SK-N-SH (cell line): ENCODE measurements at regions of chr9 and their contacts with region 1.

Region 1: DNA sequence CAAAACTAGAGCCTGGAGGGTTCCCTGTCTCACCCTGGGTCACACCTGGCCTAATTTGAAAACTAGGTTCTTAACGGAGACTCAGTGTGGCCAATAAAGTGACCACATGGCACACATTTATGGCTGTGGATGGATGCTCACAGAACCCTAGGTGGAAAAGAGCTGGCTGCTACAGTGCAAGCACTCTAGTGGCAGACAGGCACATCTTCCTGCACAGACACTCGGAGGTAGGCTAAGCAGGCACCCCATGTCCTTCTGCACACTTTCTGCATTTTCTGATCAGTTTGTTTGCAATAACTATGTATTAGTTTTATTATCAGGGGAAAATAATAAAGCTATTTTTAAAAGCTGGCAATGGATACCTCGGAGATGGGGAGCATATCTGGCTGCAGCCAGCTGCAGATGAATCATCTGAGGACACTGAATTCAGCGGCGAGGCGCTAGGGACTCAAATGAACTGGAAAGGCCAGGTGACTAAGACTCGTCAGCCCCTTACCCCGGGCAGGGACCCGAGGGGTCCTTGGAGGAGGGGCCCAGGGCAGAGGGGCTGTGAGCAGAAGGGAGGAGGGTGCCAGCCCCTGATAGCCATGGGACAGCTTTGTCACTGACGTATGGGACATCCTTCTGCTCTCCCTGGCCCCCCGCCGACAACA is 96.2 kb downstream of the OLFM1 start:
- DNase-seq: no peak
- H3K4me3 ChIP-seq: no peak overlapping the region
- H3K27ac ChIP-seq: no peak overlapping the region; a peak in 1 of 4 replicates
- H3K4me1 ChIP-seq: peaks cover 0 to 34% of the 10 kb centered on the region in 2 experiments; a peak in 1 of 4 replicates
- H3K27me3 ChIP-seq: no peaks in the 10 kb centered on the region
- CTCF ChIP-seq: no peak
- EP300 ChIP-seq: no peak
- RAD21 ChIP-seq: no peak

Region 2: GRCh38 chr9:135146766-135147473 is 36.7 kb before region 1 on chr9:
- CTCF ChIA-PET with region 1: interaction called, 13 read pairs
- POLR2A ChIA-PET with region 1: no interaction called
- DNase-seq: peak; percentile 88
- H3K4me3 ChIP-seq: no peak overlapping the region; a peak in 1 of 4 replicates
- H3K27ac ChIP-seq: peak overlapping the region in 1 of 2 experiments; percentile 93; a peak in 2 of 4 replicates
- H3K4me1 ChIP-seq: peaks cover 0 to 39% of the 10 kb centered on the region in 2 experiments; a peak in 1 of 4 replicates
- H3K27me3 ChIP-seq: no peaks in the 10 kb centered on the region
- CTCF ChIP-seq: no peak
- EP300 ChIP-seq: peak in 1 of 2 experiments; percentile 58; a peak in 1 of 4 replicates
- RAD21 ChIP-seq: 0 out of 2 replicates have a peak, but pooled peaks have one; percentile 3

Region 3: GRCh38 chr9:135157856-135158563 is 25.6 kb before region 1 on chr9:
- CTCF ChIA-PET with region 1: interaction called, 10 read pairs
- POLR2A ChIA-PET with region 1: interaction called, 3 read pairs
- DNase-seq: no peak
- H3K4me3 ChIP-seq: no peak overlapping the region
- H3K27ac ChIP-seq: no peak overlapping the region
- H3K4me1 ChIP-seq: peaks cover 0 to 26% of the 10 kb centered on the region in 2 experiments; a peak in 1 of 4 replicates
- H3K27me3 ChIP-seq: no peaks in the 10 kb centered on the region
- CTCF ChIP-seq: no peak
- EP300 ChIP-seq: no peak
- RAD21 ChIP-seq: no peak

Region 4: GRCh38 chr9:135602789-135603481 is 419.3 kb after region 1 on chr9:
- CTCF ChIA-PET with region 1: no interaction called
- POLR2A ChIA-PET with region 1: no interaction called
- DNase-seq: peak; percentile 68
- H3K4me3 ChIP-seq: no peak overlapping the region; a peak in 1 of 4 replicates
- H3K27ac ChIP-seq: no peak overlapping the region
- H3K4me1 ChIP-seq: peaks cover 0 to 4% of the 10 kb centered on the region in 2 experiments; a peak in 1 of 4 replicates
- H3K27me3 ChIP-seq: no peaks in the 10 kb centered on the region
- CTCF ChIP-seq: peak; percentile 66
- EP300 ChIP-seq: no peak
- RAD21 ChIP-seq: peak; percentile 35